Dorsolateral prefrontal cortex (tissue), 120 donors: ENCODE measurements at regions of chr11 and their contacts with region 1.

Region 1: GRCh38 chr11:2420502-2421225 is 20.1 kb downstream of the TSSC4 start:
- DNase-seq: peak in 9 of 10 donors; percentile 54 to 79 (median 65)
- H3K4me3 ChIP-seq: peak overlapping the region in 25 of 59 donors; percentile 4 to 43 (median 28)
- H3K27ac ChIP-seq: peak overlapping the region in 3 of 59 donors; percentile 32 to 67 (median 46)
- H3K27me3 ChIP-seq: no peaks in the 10 kb centered on the region
- CTCF ChIP-seq: peak; percentile 64 to 99 (median 94)

Region 2: GRCh38 chr11:2186669-2187279 is 233.9 kb before region 1 on chr11:
- intact Hi-C with region 1: loop called in 1 of 2 experiments (anchors 5 kb)
- DNase-seq: peak in 3 of 10 donors; percentile 22 to 43 (median 34)
- H3K4me3 ChIP-seq: no peak overlapping the region
- H3K27ac ChIP-seq: no peak overlapping the region
- H3K27me3 ChIP-seq: peaks cover 0 to 45% (median 3%) of the 10 kb centered on the region in 45 donors
- CTCF ChIP-seq: peak in 50 of 56 donors; percentile 10 to 58 (median 35)

Region 3: GRCh38 chr11:2196970-2197770 is 223.5 kb before region 1 on chr11:
- intact Hi-C with region 1: loop called in 1 of 2 experiments (anchors 2 kb)
- DNase-seq: peak; percentile 41 to 82 (median 70)
- H3K4me3 ChIP-seq: no peak overlapping the region
- H3K27ac ChIP-seq: no peak overlapping the region
- H3K27me3 ChIP-seq: peaks cover 0 to 6% (median 0%) of the 10 kb centered on the region in 45 donors
- CTCF ChIP-seq: peak in 54 of 56 donors; percentile 30 to 74 (median 60)

Region 4: GRCh38 chr11:2400069-2400760 is 20.4 kb before region 1 on chr11 and contains the start of gene TSSC4:
- intact Hi-C with region 1: loop called in 1 of 2 experiments (anchors 2 kb)
- DNase-seq: peak; percentile 98 to 99 (median 98)
- H3K4me3 ChIP-seq: peak within 1 kb of the TSS; percentile 65 to 100 (median 98)
- H3K27ac ChIP-seq: peak within 1 kb of the TSS; percentile 68 to 99 (median 96)
- H3K27me3 ChIP-seq: no peaks in the 10 kb centered on the region
- CTCF ChIP-seq: peak; percentile 95 to 100 (median 100)
- total RNA-seq, gene TSSC4: 23.7 to 48.6 (median 34.3) TPM

Region 5: DNA sequence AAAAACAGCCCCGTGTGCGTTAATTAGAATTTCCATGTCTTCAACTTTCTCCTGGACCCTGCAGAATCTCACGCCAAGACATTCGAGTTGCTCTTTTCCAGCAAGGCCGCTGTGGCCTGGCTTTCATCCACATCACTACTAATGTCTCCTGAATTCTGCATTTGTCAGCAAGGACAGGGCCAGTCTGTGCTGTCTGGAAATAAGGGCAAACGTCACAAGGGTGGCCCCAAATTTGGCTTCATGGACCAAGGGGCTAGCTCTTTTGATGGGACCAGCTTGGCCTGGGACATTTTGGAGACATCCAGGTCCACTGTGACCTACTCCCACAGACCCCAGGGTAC is 245.7 kb after region 1 on chr11:
- intact Hi-C with region 1: no loop called
- DNase-seq: no peak
- H3K4me3 ChIP-seq: no peak overlapping the region
- H3K27ac ChIP-seq: no peak overlapping the region
- H3K27me3 ChIP-seq: no peaks in the 10 kb centered on the region
- CTCF ChIP-seq: no peak